Mammary epithelial cell (primary cell): ENCODE measurements at regions of chr19 and their contacts with region 1.

Region 1: GRCh38 chr19:38452428-38453366 is 19.2 kb downstream of the RYR1 start:
- DNase-seq: no peak
- H3K4me3 ChIP-seq: no peak overlapping the region
- H3K27ac ChIP-seq: no peak overlapping the region
- H3K4me1 ChIP-seq: no peaks in the 10 kb centered on the region
- H3K27me3 ChIP-seq: no peaks in the 10 kb centered on the region
- CTCF ChIP-seq: no peak

Region 2: GRCh38 chr19:38355728-38356725 is 96.7 kb before region 1 on chr19:
- CTCF ChIA-PET with region 1: no interaction called
- dilution Hi-C with region 1: loop called (anchors 5 kb)
- in situ Hi-C with region 1: no loop called
- intact Hi-C with region 1: no loop called
- DNase-seq: no peak
- H3K4me3 ChIP-seq: no peak overlapping the region
- H3K27ac ChIP-seq: no peak overlapping the region
- H3K4me1 ChIP-seq: peaks cover 1% of the 10 kb centered on the region
- H3K27me3 ChIP-seq: peaks cover 14% of the 10 kb centered on the region
- CTCF ChIP-seq: no peak

Region 3: DNA sequence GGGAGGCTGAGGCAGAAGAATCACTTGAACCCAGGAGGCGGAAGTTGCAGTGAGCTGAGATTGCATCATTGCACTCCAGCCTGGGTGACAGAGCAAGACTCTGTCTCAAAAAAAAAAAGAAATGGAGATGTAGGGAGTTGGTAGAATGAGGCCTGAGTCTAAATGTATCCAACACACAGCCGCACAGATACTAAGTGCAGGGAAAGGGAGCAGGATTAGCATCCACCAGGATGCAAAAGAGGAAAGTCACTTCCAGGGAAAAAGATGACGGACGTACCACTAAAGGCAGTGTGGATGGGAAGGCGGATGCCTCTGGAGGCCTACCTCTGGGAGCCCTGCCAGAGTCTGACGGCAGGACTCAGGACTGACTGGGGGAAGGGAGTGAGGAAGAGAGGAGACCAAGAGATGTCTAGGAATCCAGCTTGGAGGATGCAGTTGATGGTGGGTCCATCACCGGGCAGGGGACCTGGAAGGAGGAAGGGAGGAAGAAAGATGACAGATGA is 43.0 kb before region 1 on chr19:
- CTCF ChIA-PET with region 1: no interaction called
- dilution Hi-C with region 1: loop called (anchors 5 kb)
- in situ Hi-C with region 1: no loop called
- intact Hi-C with region 1: no loop called
- DNase-seq: no peak
- H3K4me3 ChIP-seq: no peak overlapping the region
- H3K27ac ChIP-seq: no peak overlapping the region
- H3K4me1 ChIP-seq: no peaks in the 10 kb centered on the region
- H3K27me3 ChIP-seq: no peaks in the 10 kb centered on the region
- CTCF ChIP-seq: no peak

Region 4: GRCh38 chr19:38538386-38538785 is 85.7 kb after region 1 on chr19:
- CTCF ChIA-PET with region 1: no interaction called
- dilution Hi-C with region 1: no loop called
- in situ Hi-C with region 1: no loop called
- intact Hi-C with region 1: no loop called
- DNase-seq: no peak
- H3K4me3 ChIP-seq: no peak overlapping the region
- H3K27ac ChIP-seq: no peak overlapping the region
- H3K4me1 ChIP-seq: peaks cover 13% of the 10 kb centered on the region
- H3K27me3 ChIP-seq: no peaks in the 10 kb centered on the region
- CTCF ChIP-seq: no peak